ENCODE measurements at regions of chr2 and their contacts with region 1.

Region 1: GRCh38 chr2:67451086-67451832 is 54.1 kb downstream of the ETAA1 start:
- DNase-seq: peak; percentile 100
- H3K4me3 ChIP-seq: no peak overlapping the region
- H3K27ac ChIP-seq: peak overlapping the region; percentile 95
- H3K4me1 ChIP-seq: peaks cover 61% of the 10 kb centered on the region
- H3K27me3 ChIP-seq: no peaks in the 10 kb centered on the region
- CTCF ChIP-seq: no peak

Region 2: DNA sequence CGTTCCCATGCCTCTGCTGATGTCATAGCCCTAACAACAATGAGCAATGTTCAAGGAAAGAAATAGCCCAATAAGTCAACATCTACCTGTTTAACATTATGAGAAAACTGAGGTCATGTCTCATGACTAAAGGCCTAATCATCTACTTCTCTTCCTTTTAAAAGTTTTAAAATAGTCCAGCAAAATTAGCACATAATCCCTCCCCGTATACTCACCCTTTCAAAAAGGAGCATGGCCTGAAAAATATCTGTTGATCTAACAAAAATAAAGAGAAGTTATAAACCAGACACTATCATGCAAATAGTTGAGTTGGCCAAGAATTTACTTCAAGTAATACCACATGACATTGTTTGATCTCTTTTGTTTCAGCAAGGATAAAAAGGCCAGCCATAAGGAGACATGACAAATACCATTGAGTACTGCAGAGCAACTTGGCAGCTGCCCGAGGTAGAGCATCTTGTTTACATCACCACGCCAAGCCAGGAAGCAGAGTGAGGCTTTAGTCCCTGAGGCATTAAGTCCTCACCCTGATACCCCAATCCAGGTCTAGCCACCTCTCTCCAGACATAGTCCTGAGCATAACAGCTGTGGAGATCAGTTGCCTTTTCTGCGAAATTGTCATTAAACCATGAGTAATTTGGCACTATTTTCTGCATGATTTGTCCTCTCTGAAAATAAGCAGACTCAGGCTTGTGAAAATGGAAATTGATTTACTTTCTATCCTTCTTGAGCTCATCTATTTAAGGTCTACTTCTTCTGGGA is 191.5 kb before region 1 on chr2:
- CTCF ChIA-PET with region 1: no interaction called
- dilution Hi-C with region 1: no loop called
- in situ Hi-C with region 1: loop called in 1 of 2 experiments (anchors 25 kb)
- intact Hi-C with region 1: no loop called
- DNase-seq: peak; percentile 91
- H3K4me3 ChIP-seq: no peak overlapping the region
- H3K27ac ChIP-seq: peak overlapping the region; percentile 81
- H3K4me1 ChIP-seq: peaks cover 40% of the 10 kb centered on the region
- H3K27me3 ChIP-seq: no peaks in the 10 kb centered on the region
- CTCF ChIP-seq: no peak

Region 3: GRCh38 chr2:67437174-67437573 is 14.1 kb before region 1 on chr2:
- CTCF ChIA-PET with region 1: interaction called, 3 read pairs
- dilution Hi-C with region 1: no loop called
- in situ Hi-C with region 1: no loop called
- intact Hi-C with region 1: loop called (anchors 1 kb)
- DNase-seq: peak; percentile 55
- H3K4me3 ChIP-seq: no peak overlapping the region
- H3K27ac ChIP-seq: no peak overlapping the region
- H3K4me1 ChIP-seq: peaks cover 5% of the 10 kb centered on the region
- H3K27me3 ChIP-seq: no peaks in the 10 kb centered on the region
- CTCF ChIP-seq: no peak

Measured in mammary epithelial cell (primary cell).